ENCODE measurements at regions of chr13 and their contacts with region 1.

Region 1: DNA sequence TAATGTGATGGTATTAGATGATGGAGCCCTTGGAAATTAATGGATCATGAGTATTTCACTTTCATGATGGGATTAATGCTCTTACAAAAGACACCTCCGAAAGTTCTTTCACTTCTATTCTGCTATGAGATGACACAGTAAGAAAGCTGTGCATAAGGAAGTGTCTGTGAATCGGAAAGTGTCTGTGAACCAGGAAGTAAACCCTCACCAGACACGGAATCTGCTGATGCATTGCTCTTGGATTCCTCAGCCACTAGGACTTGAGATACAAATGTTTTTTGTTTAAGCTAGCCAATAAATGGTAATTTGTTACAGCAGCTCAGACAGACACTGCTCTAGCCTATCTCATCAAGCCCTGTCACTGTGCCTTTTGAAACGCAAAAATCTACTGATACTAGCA is 440.4 kb upstream of the PRR20A start:
- DNase-seq: no peak
- H3K4me3 Mint-ChIP-seq: no peak overlapping the region
- H3K27ac Mint-ChIP-seq: no peak overlapping the region
- H3K4me1 Mint-ChIP-seq: no peaks in the 10 kb centered on the region
- H3K27me3 Mint-ChIP-seq: no peaks in the 10 kb centered on the region

Region 2: DNA sequence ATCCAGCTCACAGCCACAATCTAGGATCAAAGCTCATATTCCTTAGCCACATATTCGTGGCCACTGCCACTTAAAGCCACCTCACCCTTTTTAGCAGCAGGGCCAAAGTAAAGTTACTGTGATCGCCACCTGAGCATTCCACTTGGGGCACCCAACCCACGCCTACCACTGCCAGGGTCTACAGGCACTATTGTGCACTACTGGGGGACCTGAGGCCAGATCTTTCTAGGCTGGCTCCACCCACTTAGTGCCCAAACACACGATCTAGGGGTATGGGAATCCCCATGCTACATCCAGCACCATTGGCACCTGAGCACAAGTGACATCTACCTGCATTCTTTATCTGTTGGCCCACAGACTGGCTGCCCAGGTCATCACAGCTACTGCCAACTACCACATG is 77.5 kb before region 1 on chr13:
- intact Hi-C with region 1: no loop called
- DNase-seq: no peak
- H3K4me3 Mint-ChIP-seq: no peak overlapping the region
- H3K27ac Mint-ChIP-seq: no peak overlapping the region
- H3K4me1 Mint-ChIP-seq: no peaks in the 10 kb centered on the region
- H3K27me3 Mint-ChIP-seq: no peaks in the 10 kb centered on the region

Region 3: GRCh38 chr13:56670563-56670962 is 29.8 kb before region 1 on chr13:
- intact Hi-C with region 1: no loop called
- DNase-seq: no peak
- H3K4me3 Mint-ChIP-seq: no peak overlapping the region
- H3K27ac Mint-ChIP-seq: no peak overlapping the region
- H3K4me1 Mint-ChIP-seq: no peaks in the 10 kb centered on the region
- H3K27me3 Mint-ChIP-seq: no peaks in the 10 kb centered on the region

Region 4: GRCh38 chr13:56687131-56687530 is 13.2 kb before region 1 on chr13:
- intact Hi-C with region 1: loop called (anchors 1 kb)
- DNase-seq: no peak
- H3K4me3 Mint-ChIP-seq: no peak overlapping the region
- H3K27ac Mint-ChIP-seq: no peak overlapping the region
- H3K4me1 Mint-ChIP-seq: no peaks in the 10 kb centered on the region
- H3K27me3 Mint-ChIP-seq: no peaks in the 10 kb centered on the region

Region 5: GRCh38 chr13:56864451-56864850 is 164.1 kb after region 1 on chr13:
- intact Hi-C with region 1: no loop called
- DNase-seq: no peak
- H3K4me3 Mint-ChIP-seq: no peak overlapping the region
- H3K27ac Mint-ChIP-seq: no peak overlapping the region
- H3K4me1 Mint-ChIP-seq: no peaks in the 10 kb centered on the region
- H3K27me3 Mint-ChIP-seq: no peaks in the 10 kb centered on the region

Region 6: GRCh38 chr13:58151452-58151851 is 1451.1 kb after region 1 on chr13:
- intact Hi-C with region 1: no loop called
- DNase-seq: no peak
- H3K4me3 Mint-ChIP-seq: no peak overlapping the region
- H3K27ac Mint-ChIP-seq: no peak overlapping the region
- H3K4me1 Mint-ChIP-seq: no peaks in the 10 kb centered on the region
- H3K27me3 Mint-ChIP-seq: no peaks in the 10 kb centered on the region

Measured in activated CD4-positive, alpha-beta T cell treated with anti-CD3 and anti-CD28 coated beads, Interleukin-2, amount 10 ng/mL, durations not matched to agents 24 days and 14 days (primary cell).